ENCODE measurements at regions of chr13 and their contacts with region 1.

Region 1: DNA sequence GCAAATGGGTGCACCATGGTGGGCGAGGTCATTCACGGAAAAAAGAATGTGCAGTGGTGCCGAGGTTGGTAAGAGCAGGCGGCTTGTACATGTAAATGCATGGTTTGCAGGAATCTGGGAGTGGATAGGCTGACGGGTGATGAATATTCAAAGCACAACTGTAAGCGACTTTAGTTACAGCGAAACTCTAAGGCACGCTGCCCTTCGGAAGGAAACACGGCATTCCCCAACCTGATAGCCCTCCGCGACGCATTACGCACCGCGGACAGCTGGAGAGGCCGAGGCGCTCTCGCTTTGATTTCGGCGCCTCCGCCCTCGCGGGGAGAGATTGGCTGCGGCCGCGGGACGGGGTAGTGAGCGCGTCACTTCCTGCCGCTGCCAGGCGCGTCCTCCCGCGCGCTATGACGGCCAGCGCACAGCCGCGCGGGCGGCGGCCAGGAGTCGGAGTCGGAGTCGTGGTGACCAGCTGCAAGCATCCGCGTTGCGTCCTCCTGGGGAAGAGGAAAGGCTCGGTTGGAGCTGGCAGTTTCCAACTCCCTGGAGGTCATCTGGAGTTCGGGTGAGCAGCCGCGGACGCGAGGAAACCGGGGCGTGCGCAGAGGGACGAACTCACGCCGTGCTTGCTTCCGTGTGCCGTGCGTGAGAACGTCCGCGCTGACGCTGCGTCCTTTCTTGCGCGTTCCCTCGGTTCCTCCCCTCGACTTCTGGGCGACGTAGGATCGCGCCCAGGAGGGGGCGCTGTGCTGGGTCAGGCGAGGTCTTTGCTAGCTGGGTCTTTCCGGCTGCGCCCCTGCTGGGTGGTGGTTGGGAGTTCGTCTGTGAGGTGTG is at the start of gene NUDT15:
- DNase-seq: peak; percentile 98
- ATAC-seq: peak; percentile 94
- H3K4me3 ChIP-seq: peak within 1 kb of the TSS; percentile 84 to 94 (median 92)
- H3K4me3 Mint-ChIP-seq: peak within 1 kb of the TSS; percentile 96
- H3K27ac ChIP-seq: peak within 1 kb of the TSS; percentile 96 to 98
- H3K27ac Mint-ChIP-seq: peak within 1 kb of the TSS; percentile 96
- H3K4me1 ChIP-seq: peaks cover 13 to 18% of the 10 kb centered on the region in 2 donors
- H3K4me1 Mint-ChIP-seq: peaks cover 22% of the 10 kb centered on the region
- H3K27me3 ChIP-seq: no peaks in the 10 kb centered on the region
- H3K27me3 Mint-ChIP-seq: no peaks in the 10 kb centered on the region
- CTCF ChIP-seq: peak; percentile 97
- total RNA-seq, gene NUDT15: 4.2 TPM in 2 replicates

Region 2: GRCh38 chr13:47757466-47758080 is 280.0 kb before region 1 on chr13:
- CTCF ChIA-PET with region 1: no interaction called
- POLR2A ChIA-PET with region 1: no interaction called
- intact Hi-C with region 1: no loop called
- DNase-seq: no peak
- ATAC-seq: no peak
- H3K4me3 ChIP-seq: no peak overlapping the region
- H3K4me3 Mint-ChIP-seq: no peak overlapping the region
- H3K27ac ChIP-seq: no peak overlapping the region
- H3K27ac Mint-ChIP-seq: no peak overlapping the region
- H3K4me1 ChIP-seq: no peaks in the 10 kb centered on the region
- H3K4me1 Mint-ChIP-seq: no peaks in the 10 kb centered on the region
- H3K27me3 ChIP-seq: no peaks in the 10 kb centered on the region
- H3K27me3 Mint-ChIP-seq: peaks cover 11% of the 10 kb centered on the region
- CTCF ChIP-seq: no peak

Region 3: DNA sequence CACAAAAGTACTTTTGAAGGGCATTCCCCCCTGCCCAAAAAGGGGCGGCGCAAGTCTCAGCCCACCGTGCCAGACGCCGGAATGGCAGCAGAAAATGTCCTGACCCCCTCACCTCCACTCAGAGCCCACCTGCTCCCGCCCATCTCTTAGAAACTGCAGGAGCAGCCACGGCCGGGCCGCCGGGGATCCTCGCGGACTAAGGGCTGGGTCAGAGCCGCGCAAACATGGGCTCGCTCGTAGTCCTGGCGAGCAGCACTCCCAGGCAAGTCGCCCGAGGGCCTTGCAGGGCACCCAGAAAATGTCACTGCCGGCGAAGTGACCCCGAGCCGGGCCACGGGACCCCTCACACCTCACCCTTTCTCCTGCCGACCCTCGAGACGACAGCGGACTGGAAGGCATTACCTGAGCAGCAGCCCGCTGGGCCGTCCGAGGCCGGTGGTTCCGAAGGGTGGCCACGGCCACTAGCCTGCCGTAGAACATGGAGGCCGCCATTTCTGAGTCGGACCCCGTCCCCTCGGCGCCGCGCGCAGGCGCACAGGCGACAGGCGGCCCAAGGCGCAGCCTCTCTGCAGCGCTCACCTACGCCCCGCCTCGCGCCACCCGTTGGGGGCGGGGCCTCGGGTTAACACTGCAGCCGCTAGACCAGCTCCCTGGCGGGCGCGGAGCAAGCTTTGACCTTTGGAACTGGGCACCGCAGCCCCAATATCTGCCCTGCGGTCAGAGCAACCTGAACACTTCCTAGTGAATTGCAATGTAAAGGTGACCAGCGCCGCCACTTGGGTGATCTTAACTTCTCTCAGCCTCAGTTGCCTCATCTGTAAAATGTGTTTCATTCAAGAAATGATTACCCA is 36.6 kb before region 1 on chr13 and contains the start of gene SUCLA2:
- CTCF ChIA-PET with region 1: no interaction called
- POLR2A ChIA-PET with region 1: no interaction called
- intact Hi-C with region 1: loop called (anchors 1 kb)
- DNase-seq: peak; percentile 90
- ATAC-seq: peak; percentile 100
- H3K4me3 ChIP-seq: peak within 1 kb of the TSS; percentile 72 to 89 (median 79)
- H3K4me3 Mint-ChIP-seq: peak within 1 kb of the TSS; percentile 95
- H3K27ac ChIP-seq: peak within 1 kb of the TSS; percentile 43 to 82
- H3K27ac Mint-ChIP-seq: peak within 1 kb of the TSS; percentile 72
- H3K4me1 ChIP-seq: peaks cover 13% of the 10 kb centered on the region in 2 donors
- H3K4me1 Mint-ChIP-seq: peaks cover 30% of the 10 kb centered on the region
- H3K27me3 ChIP-seq: no peaks in the 10 kb centered on the region
- H3K27me3 Mint-ChIP-seq: no peaks in the 10 kb centered on the region
- CTCF ChIP-seq: no peak
- total RNA-seq, gene SUCLA2: 33.7 and 33.9 TPM in 2 replicates

Region 4: GRCh38 chr13:48078251-48078656 is 40.7 kb after region 1 on chr13:
- CTCF ChIA-PET with region 1: interaction called, 10 read pairs
- POLR2A ChIA-PET with region 1: interaction called, 3 read pairs
- intact Hi-C with region 1: loop called (anchors 5 kb)
- DNase-seq: peak; percentile 81
- ATAC-seq: peak; percentile 99
- H3K4me3 ChIP-seq: no peak overlapping the region
- H3K4me3 Mint-ChIP-seq: no peak overlapping the region
- H3K27ac ChIP-seq: peak overlapping the region in 1 of 2 donors; percentile 55
- H3K27ac Mint-ChIP-seq: peak overlapping the region; percentile 1
- H3K4me1 ChIP-seq: peaks cover 5 to 6% of the 10 kb centered on the region in 2 donors
- H3K4me1 Mint-ChIP-seq: peaks cover 9% of the 10 kb centered on the region
- H3K27me3 ChIP-seq: no peaks in the 10 kb centered on the region
- H3K27me3 Mint-ChIP-seq: no peaks in the 10 kb centered on the region
- CTCF ChIP-seq: peak; percentile 74

Region 5: DNA sequence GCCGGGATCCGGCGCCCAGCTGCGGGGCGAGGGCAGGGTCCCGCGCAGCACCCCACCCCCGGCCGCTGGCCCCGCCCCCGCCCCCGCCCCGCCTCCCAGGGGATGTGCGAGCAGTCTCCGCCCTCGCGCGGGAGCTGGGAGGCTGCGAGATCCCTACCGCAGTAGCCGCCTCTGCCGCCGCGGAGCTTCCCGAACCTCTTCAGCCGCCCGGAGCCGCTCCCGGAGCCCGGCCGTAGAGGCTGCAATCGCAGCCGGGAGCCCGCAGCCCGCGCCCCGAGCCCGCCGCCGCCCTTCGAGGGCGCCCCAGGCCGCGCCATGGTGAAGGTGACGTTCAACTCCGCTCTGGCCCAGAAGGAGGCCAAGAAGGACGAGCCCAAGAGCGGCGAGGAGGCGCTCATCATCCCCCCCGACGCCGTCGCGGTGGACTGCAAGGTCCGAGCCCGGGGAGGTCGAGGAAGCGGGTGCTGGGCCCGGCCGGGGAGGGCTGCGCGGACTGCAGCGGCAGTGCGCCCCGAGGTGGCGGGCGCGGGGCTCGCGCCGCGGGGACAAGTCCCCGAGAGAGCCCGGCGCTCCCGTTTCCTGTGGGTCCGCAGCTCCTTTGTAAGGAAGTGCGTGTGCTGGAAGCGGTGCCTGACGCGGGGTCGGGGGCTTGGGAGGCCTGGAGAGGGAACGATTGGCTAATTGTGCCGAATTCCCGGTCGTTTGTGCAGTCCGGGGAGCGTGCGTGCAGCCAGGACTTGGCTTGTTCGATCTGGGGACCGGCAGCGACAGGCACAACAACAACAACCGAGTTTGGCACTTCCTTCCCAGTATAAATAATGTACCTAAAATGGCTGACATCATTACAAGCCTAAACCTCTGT is 195.7 kb after region 1 on chr13 and contains the start of gene ITM2B:
- CTCF ChIA-PET with region 1: interaction called, 5 read pairs
- POLR2A ChIA-PET with region 1: no interaction called
- intact Hi-C with region 1: loop called (anchors 5 kb)
- DNase-seq: peak; percentile 80
- ATAC-seq: peak; percentile 78
- H3K4me3 ChIP-seq: peak within 1 kb of the TSS; percentile 84 to 98 (median 89)
- H3K4me3 Mint-ChIP-seq: peak within 1 kb of the TSS; percentile 96
- H3K27ac ChIP-seq: peak within 1 kb of the TSS; percentile 83 to 89
- H3K27ac Mint-ChIP-seq: peak within 1 kb of the TSS; percentile 97
- H3K4me1 ChIP-seq: peaks cover 27 to 36% of the 10 kb centered on the region in 2 donors
- H3K4me1 Mint-ChIP-seq: peaks cover 46% of the 10 kb centered on the region
- H3K27me3 ChIP-seq: no peaks in the 10 kb centered on the region
- H3K27me3 Mint-ChIP-seq: peaks cover 5% of the 10 kb centered on the region
- CTCF ChIP-seq: peak; percentile 57
- total RNA-seq, gene ITM2B: 165 and 177 TPM in 2 replicates

Region 6: DNA sequence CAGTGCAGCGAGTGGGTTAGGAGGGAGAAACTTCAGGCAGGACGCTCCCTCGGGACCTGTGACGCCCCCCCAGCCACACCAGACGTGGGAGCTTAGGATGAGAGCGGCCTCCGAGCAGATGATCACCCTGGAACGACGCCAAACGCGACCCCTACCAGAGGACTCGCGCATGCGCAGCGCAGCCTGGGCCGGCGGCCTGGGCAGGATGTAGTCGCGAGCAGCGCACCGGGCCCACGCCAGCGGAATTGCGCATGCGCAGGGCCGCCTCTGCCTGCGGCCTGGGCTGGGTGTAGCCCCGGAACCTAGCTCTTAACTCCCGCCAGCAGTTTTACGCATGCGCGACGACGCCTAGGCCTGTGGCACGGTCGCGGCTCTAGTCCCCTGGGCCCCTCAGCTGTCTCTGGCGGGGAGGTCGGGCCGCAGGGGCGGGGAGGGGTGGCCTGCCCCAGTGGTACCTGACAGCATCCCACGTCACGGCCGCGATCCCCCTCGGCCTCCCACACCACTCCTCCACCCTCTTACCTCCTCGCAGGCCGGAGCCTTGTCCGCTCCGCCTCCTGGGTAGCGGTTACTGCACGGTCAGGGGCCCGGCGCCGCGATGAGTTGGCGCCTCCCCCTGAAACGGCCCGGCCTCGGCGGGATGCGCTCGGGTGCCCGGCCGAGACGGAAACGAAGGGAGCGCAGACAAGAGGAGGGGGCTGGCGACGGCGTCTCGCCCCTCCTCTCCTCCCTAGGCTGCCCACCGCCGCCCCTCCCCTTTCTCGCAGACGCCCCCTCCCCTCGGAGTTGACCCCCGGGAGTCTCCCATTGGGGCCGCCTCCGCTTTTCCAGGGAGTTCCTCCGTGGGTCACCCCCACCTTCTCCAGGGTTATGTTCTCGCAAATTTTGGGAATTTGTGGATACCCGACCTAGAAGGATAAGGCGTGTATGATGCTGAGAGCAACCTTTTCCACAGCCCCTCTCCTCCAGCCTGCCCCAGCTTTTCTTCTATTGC is 495.2 kb after region 1 on chr13 and contains the start of gene RCBTB2:
- CTCF ChIA-PET with region 1: interaction called, 5 read pairs
- POLR2A ChIA-PET with region 1: no interaction called
- intact Hi-C with region 1: loop called (anchors 5 kb)
- DNase-seq: peak; percentile 98
- ATAC-seq: peak; percentile 89
- H3K4me3 ChIP-seq: peak within 1 kb of the TSS; percentile 54 to 92 (median 82)
- H3K4me3 Mint-ChIP-seq: peak within 1 kb of the TSS; percentile 97
- H3K27ac ChIP-seq: peak within 1 kb of the TSS; percentile 63 to 85
- H3K27ac Mint-ChIP-seq: peak within 1 kb of the TSS; percentile 98
- H3K4me1 ChIP-seq: peaks cover 20 to 24% of the 10 kb centered on the region in 2 donors
- H3K4me1 Mint-ChIP-seq: peaks cover 26% of the 10 kb centered on the region
- H3K27me3 ChIP-seq: peaks cover 0 to 15% (median 11%) of the 10 kb centered on the region in 4 experiments
- H3K27me3 Mint-ChIP-seq: peaks cover 22% of the 10 kb centered on the region
- CTCF ChIP-seq: no peak
- total RNA-seq, gene RCBTB2: 2.7 and 3.7 TPM in 2 replicates

Region 7: DNA sequence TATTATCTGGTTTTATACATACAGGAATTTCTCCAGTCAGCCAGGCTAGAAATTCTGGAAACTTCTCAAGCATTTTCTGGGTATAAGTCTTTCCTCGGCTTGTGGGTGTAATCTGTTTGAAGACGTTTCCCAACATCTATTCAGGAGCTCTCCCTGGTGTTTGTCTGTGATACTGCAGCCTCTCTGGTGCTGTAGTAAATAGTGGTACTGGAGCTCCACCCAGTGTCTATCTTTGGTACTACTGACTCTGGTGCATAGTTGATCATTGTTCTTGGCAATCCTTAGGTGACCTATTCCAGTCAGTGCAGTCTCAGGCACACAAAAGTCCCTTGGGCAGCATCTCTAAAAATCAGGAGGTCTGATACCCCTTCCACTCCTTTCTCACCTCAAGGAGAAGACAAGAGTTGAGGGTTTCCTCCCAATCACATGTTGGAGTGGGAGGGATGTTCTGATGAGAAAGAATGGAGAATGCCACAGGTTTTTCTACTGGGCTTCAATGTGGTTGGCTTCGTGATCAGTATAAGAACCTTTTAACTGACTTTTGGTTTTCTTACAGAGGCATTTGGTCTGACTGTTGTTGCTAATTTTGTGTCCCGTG is 731.6 kb after region 1 on chr13:
- CTCF ChIA-PET with region 1: interaction called, 17 read pairs
- POLR2A ChIA-PET with region 1: no interaction called
- intact Hi-C with region 1: no loop called
- DNase-seq: peak; percentile 87
- ATAC-seq: peak; percentile 100
- H3K4me3 ChIP-seq: no peak overlapping the region
- H3K4me3 Mint-ChIP-seq: no peak overlapping the region
- H3K27ac ChIP-seq: no peak overlapping the region
- H3K27ac Mint-ChIP-seq: no peak overlapping the region
- H3K4me1 ChIP-seq: peaks cover 0 to 2% of the 10 kb centered on the region in 2 donors
- H3K4me1 Mint-ChIP-seq: peaks cover 2% of the 10 kb centered on the region
- H3K27me3 ChIP-seq: no peaks in the 10 kb centered on the region
- H3K27me3 Mint-ChIP-seq: peaks cover 40% of the 10 kb centered on the region
- CTCF ChIP-seq: peak; percentile 99

Region 8: DNA sequence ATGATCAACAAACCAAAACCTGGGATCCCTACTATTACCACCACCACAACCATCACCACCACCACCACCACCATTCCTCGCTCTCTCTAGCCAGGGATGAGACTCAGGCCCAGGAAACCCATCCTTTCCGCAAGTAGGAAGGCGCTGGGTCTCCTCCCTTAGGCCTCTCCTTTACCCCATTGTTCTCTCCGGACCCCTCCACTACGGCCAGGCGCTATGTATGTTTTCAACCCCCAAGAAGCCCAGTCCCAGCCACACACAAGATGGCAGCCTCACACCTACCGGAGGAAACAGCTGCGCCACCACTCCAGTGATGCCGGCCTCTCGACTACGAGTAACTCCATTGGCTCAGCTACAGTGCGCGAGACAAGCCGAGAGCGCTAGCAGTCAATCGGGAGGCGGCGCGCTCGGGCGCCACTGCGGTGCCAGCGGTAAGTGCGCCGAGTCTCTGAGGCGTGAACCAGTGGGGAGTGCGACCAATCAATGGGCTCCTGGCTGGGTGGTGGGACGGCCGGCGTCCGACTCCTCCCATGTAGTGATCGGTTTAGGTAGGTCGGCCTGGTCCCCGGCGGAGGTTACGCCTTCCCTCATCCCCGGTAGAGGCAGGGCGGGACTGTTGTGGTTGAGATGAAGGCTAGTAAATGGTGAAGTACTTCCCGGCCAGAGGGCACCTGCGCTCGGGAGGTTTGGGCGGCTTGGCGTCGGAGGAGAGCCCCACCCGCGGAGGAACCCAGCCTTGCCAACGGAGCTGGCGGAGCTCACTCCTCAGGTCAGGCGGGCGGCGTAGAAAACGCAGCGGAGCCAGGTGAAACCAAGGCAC is 1406.4 kb after region 1 on chr13 and contains the starts of genes CAB39L and SETDB2:
- CTCF ChIA-PET with region 1: no interaction called
- POLR2A ChIA-PET with region 1: no interaction called
- intact Hi-C with region 1: loop called (anchors 5 kb)
- DNase-seq: peak; percentile 100
- ATAC-seq: peak; percentile 89
- H3K4me3 ChIP-seq: peak within 1 kb of the TSS; percentile 63 to 98 (median 81)
- H3K4me3 Mint-ChIP-seq: peak within 1 kb of the TSS; percentile 96
- H3K27ac ChIP-seq: peak within 1 kb of the TSS; percentile 97
- H3K27ac Mint-ChIP-seq: peak within 1 kb of the TSS; percentile 99
- H3K4me1 ChIP-seq: peaks cover 33 to 51% of the 10 kb centered on the region in 2 donors
- H3K4me1 Mint-ChIP-seq: peaks cover 71% of the 10 kb centered on the region
- H3K27me3 ChIP-seq: no peaks in the 10 kb centered on the region
- H3K27me3 Mint-ChIP-seq: no peaks in the 10 kb centered on the region
- CTCF ChIP-seq: peak; percentile 34
- total RNA-seq, gene CAB39L: 8.9 and 9.6 TPM in 2 replicates
- total RNA-seq, gene SETDB2: 38.2 and 40.1 TPM in 2 replicates

Measured in B cell (primary cell).